Dorsolateral prefrontal cortex (tissue), 120 donors: ENCODE measurements at regions of chr17 and their contacts with region 1.

Region 1: GRCh38 chr17:30291543-30292285 is at the start of gene BLMH:
- DNase-seq: peak; percentile 55 to 87 (median 64)
- H3K4me3 ChIP-seq: peak within 1 kb of the TSS; percentile 48 to 99 (median 92)
- H3K27ac ChIP-seq: peak within 1 kb of the TSS in 57 of 59 donors; percentile 6 to 92 (median 77)
- H3K27me3 ChIP-seq: no peaks in the 10 kb centered on the region
- CTCF ChIP-seq: peak in 16 of 56 donors; percentile 2 to 46 (median 20)
- total RNA-seq, gene BLMH: 21.8 to 42.7 (median 30.8) TPM

Region 2: GRCh38 chr17:30134551-30134950 is 157.2 kb before region 1 on chr17:
- intact Hi-C with region 1: loop called in 1 of 2 experiments (anchors 10 kb)
- DNase-seq: no peak
- H3K4me3 ChIP-seq: no peak overlapping the region
- H3K27ac ChIP-seq: no peak overlapping the region
- H3K27me3 ChIP-seq: no peaks in the 10 kb centered on the region
- CTCF ChIP-seq: no peak

Region 3: DNA sequence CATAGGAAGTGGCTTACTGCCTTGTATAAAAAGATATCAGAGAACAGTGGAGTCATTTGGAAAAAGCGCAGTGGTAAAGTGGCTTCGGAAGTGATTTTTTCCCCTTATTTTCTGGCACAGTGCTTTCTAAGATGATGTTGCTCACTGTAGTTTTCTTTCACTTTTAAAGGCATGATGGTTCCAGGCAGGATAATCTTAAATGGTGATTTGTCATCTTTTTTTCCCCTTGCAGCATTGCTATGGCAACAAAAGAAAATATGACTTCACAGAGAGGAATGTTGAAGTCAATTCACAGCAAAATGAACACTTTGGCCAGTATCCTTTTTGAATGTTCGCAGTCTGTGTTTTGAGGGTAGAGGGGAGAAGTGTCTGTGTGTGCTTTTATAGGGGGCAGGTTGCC is 228.0 kb after region 1 on chr17:
- intact Hi-C with region 1: no loop called
- DNase-seq: no peak
- H3K4me3 ChIP-seq: no peak overlapping the region
- H3K27ac ChIP-seq: peak overlapping the region in 12 of 59 donors; percentile 1 to 78 (median 38)
- H3K27me3 ChIP-seq: no peaks in the 10 kb centered on the region
- CTCF ChIP-seq: no peak